ENCODE measurements at regions of chr5 and their contacts with region 1.

Region 1: DNA sequence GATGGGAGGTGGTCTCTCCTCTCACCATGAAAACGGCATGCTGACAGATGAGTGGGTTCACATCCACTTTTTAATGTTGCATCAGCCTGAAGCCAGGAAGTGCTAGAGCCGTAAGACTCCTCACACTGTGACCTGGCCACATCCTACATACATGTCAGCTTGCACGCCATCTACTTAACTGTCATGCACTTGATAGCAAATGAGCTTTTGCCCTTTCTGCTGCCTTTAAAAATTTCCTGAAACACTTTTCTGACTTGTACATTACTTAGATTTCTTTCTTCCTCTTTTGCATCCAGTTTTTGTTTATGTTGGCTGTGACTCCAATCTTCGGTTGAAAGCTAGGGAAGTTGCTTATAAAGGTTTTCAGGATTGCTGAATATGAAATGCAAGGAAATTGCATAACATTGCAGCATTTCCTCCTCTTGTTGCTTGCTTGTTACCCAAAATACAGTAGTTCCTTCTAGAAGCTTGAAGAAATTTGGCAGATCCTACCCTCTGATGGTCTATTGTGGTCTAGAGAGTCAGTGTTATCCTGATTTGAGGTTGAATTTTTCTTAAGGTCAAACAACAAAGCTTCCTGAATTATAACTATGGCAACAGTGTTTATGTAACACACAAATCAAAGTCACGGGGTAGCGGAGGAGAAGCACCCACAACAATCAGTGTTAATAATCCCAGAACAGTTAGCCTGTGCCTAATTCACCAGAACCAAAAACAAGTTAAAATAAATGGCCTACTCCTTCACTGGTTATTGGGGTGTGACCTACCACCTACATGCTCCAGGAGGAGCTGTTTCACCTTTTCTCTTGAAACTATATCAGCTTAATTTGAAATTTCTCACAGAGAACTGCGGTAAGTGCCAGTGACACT is 232.5 kb downstream of the ARHGAP26 start:
- DNase-seq: peak; percentile 65
- H3K4me3 Mint-ChIP-seq: peak overlapping the region; percentile 54
- H3K27ac Mint-ChIP-seq: peak overlapping the region; percentile 91
- H3K4me1 Mint-ChIP-seq: peaks cover 73% of the 10 kb centered on the region
- H3K27me3 Mint-ChIP-seq: no peaks in the 10 kb centered on the region

Region 2: GRCh38 chr5:142821733-142822487 is 180.8 kb before region 1 on chr5:
- intact Hi-C with region 1: loop called (anchors 10 kb)
- DNase-seq: no peak
- H3K4me3 Mint-ChIP-seq: no peak overlapping the region
- H3K27ac Mint-ChIP-seq: peak overlapping the region; percentile 72
- H3K4me1 Mint-ChIP-seq: peaks cover 69% of the 10 kb centered on the region
- H3K27me3 Mint-ChIP-seq: no peaks in the 10 kb centered on the region

Region 3: DNA sequence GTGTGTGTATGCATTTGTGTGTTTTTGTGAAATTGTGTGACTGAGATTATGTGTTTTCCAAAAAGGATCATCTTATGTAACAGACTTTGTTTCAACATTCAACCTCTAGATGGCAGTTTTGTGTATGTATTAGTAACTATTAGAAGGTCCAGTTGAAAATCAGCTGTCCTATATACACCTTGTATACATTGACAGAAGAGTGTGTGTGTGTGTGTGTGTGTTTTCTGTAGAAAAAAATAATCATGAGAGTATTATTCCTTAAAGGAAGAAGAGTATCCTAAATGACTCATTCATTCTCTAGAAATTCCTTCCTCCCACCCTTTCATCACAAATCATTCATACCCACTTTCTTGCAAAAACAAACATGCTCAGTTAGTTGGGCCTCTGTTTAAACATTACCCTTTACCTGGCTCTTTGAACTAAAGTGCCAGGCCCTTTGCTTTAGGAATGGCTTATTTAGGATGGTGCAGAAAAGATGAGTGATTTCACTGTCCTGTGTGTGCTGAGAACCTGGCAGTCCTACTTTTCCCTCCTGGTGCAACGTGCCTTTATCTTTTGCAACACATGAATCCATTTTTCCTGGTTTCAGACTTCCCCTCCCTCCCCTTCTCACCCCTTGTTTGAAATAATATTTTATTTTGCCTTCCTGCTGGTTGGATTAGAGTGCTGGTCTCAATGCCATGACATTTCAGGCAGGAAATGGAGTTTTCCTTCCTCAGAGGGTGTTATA is 80.3 kb before region 1 on chr5:
- intact Hi-C with region 1: loop called (anchors 5 kb)
- DNase-seq: no peak
- H3K4me3 Mint-ChIP-seq: no peak overlapping the region
- H3K27ac Mint-ChIP-seq: no peak overlapping the region
- H3K4me1 Mint-ChIP-seq: peaks cover 33% of the 10 kb centered on the region
- H3K27me3 Mint-ChIP-seq: no peaks in the 10 kb centered on the region

Region 4: GRCh38 chr5:143509758-143510221 is 507.1 kb after region 1 on chr5:
- intact Hi-C with region 1: loop called (anchors 5 kb)
- DNase-seq: no peak
- H3K4me3 Mint-ChIP-seq: no peak overlapping the region
- H3K27ac Mint-ChIP-seq: no peak overlapping the region
- H3K4me1 Mint-ChIP-seq: peaks cover 25% of the 10 kb centered on the region
- H3K27me3 Mint-ChIP-seq: no peaks in the 10 kb centered on the region

Region 5: DNA sequence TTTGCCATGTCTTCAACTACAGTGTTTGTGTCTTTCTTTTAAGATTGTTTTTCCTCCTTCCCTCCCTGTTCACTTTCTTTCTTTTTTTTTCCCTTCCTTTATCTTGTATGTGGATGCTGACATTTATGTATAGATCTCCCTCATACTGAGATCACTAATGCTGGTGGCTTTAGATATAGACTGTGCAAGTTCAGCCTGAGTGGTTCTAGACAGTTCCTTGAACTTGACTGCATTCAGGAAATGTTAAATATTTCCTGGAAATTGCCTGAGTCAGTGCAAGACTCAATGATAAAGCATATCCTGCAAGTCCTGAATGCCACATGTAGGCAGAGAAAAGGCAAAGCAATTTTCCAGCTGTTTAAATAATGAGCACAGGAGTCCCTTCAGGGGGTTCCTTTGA is 583.3 kb after region 1 on chr5:
- intact Hi-C with region 1: loop called (anchors 5 kb)
- DNase-seq: no peak
- H3K4me3 Mint-ChIP-seq: peak overlapping the region; percentile 6
- H3K27ac Mint-ChIP-seq: peak overlapping the region; percentile 71
- H3K4me1 Mint-ChIP-seq: peaks cover 61% of the 10 kb centered on the region
- H3K27me3 Mint-ChIP-seq: no peaks in the 10 kb centered on the region

Region 6: DNA sequence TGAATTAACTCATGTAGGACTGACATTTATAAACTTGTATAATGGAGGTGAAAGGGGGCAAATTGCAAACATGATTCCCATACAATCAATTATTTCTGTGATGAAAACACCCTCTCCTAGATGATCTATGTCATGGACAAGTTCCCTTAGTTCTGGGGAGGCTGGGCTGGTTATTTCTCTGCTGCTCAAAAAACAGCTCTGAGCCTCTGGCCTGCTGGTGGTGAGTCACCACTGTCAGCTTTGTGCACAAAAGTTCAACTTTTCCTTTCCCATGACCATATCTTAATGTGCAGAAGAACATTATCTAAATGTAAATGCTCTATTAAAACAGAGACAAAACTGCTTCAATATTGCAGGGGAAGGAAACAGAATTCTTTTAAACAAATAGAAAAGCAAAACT is 894.3 kb after region 1 on chr5:
- intact Hi-C with region 1: loop called (anchors 10 kb)
- DNase-seq: no peak
- H3K4me3 Mint-ChIP-seq: no peak overlapping the region
- H3K27ac Mint-ChIP-seq: peak overlapping the region; percentile 66
- H3K4me1 Mint-ChIP-seq: peaks cover 28% of the 10 kb centered on the region
- H3K27me3 Mint-ChIP-seq: peaks cover 1% of the 10 kb centered on the region

Region 7: GRCh38 chr5:143968011-143968878 is 965.6 kb after region 1 on chr5:
- intact Hi-C with region 1: loop called (anchors 5 kb)
- DNase-seq: no peak
- H3K4me3 Mint-ChIP-seq: no peak overlapping the region
- H3K27ac Mint-ChIP-seq: no peak overlapping the region
- H3K4me1 Mint-ChIP-seq: peaks cover 2% of the 10 kb centered on the region
- H3K27me3 Mint-ChIP-seq: peaks cover 30% of the 10 kb centered on the region